Naive thymus-derived CD8-positive, alpha-beta T cell (primary cell): ENCODE measurements at regions of chr13 and their contacts with region 1.

Region 1: GRCh38 chr13:36999054-36999714 is at the start of gene ALG5:
- DNase-seq: peak; percentile 89 to 97 (median 94)
- ATAC-seq: peak; percentile 63 to 70
- H3K4me3 Mint-ChIP-seq: peak within 1 kb of the TSS; percentile 96 to 100 (median 100)
- H3K27ac Mint-ChIP-seq: peak within 1 kb of the TSS; percentile 99 to 100 (median 100)
- H3K4me1 Mint-ChIP-seq: peaks cover 22 to 46% (median 43%) of the 10 kb centered on the region in 4 donors
- H3K27me3 Mint-ChIP-seq: peaks cover 0 to 5% (median 0%) of the 10 kb centered on the region in 5 donors
- polyA plus RNA-seq, gene ALG5: 61.9 to 89.5 (median 73.6) TPM

Region 2: DNA sequence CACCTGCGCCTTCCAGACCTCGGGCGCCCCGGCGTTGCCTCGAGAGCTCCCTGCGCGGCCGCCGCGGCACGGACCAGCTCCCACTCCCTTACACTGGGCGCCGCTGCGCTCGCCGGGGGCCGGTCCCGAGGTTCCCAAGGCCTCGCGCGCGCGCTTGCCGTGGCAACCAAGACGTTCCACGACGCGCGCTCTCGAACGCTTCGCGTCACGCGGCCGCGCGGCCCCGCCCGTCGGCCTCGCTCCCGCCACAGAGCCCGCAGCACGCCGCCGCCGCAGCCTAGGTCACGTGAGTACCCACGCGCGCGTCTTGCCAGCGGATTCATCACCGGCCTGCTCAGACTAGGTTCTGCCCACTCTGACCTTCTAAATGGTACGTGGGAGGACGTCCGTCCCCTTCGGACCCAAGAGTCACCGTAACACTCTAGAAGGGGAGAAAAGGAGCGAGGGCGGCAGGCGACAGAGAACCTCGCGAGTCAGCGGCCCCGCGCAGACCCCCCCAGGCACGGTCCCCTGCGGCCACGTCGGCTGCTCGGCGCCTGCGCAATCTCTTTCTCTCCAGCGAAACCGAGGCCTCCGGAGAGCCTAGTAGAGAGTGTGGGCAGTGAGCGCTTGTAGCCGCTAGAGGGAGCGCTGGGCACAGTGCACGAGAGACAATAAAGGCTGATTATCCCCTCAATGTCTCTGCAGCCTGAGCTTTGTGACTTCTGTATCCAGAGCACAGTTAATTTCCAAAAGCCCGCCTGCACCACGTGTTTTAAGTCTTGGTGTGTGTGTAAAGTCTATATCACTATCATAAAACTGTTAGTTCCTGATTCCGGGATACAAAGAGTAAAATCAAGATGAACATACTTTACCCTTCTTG is 652.7 kb before region 1 on chr13 and contains the start of gene SPART:
- POLR2A ChIA-PET with region 1: interaction called, 14 read pairs
- DNase-seq: peak; percentile 81 to 96 (median 87)
- ATAC-seq: peak; percentile 82 to 86
- H3K4me3 Mint-ChIP-seq: peak within 1 kb of the TSS; percentile 86 to 98 (median 95)
- H3K27ac Mint-ChIP-seq: peak within 1 kb of the TSS; percentile 93 to 99 (median 98)
- H3K4me1 Mint-ChIP-seq: peaks cover 23 to 38% (median 33%) of the 10 kb centered on the region in 4 donors
- H3K27me3 Mint-ChIP-seq: peaks cover 0 to 1% (median 0%) of the 10 kb centered on the region in 5 donors
- polyA plus RNA-seq, gene SPART: 23.1 to 44.3 (median 32.4) TPM

Region 3: GRCh38 chr13:36858290-36858689 is 140.9 kb before region 1 on chr13:
- POLR2A ChIA-PET with region 1: no interaction called
- DNase-seq: no peak
- ATAC-seq: no peak
- H3K4me3 Mint-ChIP-seq: no peak overlapping the region
- H3K27ac Mint-ChIP-seq: no peak overlapping the region
- H3K4me1 Mint-ChIP-seq: peaks cover 0 to 2% (median 0%) of the 10 kb centered on the region in 4 donors
- H3K27me3 Mint-ChIP-seq: peaks cover 14 to 55% (median 32%) of the 10 kb centered on the region in 5 donors

Region 4: DNA sequence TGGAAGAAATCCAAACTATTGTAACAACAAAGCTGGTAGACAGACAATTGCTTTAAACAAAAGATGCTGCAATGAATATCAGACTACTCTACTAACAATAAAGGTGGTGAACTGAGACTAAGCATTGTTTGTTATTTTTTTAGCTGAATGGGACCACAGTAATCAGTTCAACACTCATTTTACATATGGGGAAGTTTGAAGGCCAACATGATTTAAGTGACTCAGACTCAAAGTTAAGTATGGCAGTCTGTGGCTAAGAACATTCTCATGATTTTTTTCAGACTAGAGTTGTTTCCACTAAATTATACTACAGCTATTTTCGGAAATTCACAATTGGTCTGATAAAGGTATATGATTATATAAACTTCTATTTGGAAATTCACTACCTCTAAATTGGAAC is 11.8 kb after region 1 on chr13:
- POLR2A ChIA-PET with region 1: interaction called, 17 read pairs
- DNase-seq: no peak
- ATAC-seq: no peak
- H3K4me3 Mint-ChIP-seq: no peak overlapping the region
- H3K27ac Mint-ChIP-seq: peak overlapping the region in 2 of 10 donors; percentile 29 to 68
- H3K4me1 Mint-ChIP-seq: peaks cover 0 to 12% (median 6%) of the 10 kb centered on the region in 4 donors
- H3K27me3 Mint-ChIP-seq: no peaks in the 10 kb centered on the region

Region 5: GRCh38 chr13:37023871-37024270 is 24.7 kb after region 1 on chr13:
- POLR2A ChIA-PET with region 1: interaction called, 10 read pairs
- DNase-seq: no peak
- ATAC-seq: no peak
- H3K4me3 Mint-ChIP-seq: no peak overlapping the region
- H3K27ac Mint-ChIP-seq: peak overlapping the region in 5 of 10 donors; percentile 10 to 63 (median 29)
- H3K4me1 Mint-ChIP-seq: peaks cover 0 to 5% (median 1%) of the 10 kb centered on the region in 4 donors
- H3K27me3 Mint-ChIP-seq: no peaks in the 10 kb centered on the region

Region 6: DNA sequence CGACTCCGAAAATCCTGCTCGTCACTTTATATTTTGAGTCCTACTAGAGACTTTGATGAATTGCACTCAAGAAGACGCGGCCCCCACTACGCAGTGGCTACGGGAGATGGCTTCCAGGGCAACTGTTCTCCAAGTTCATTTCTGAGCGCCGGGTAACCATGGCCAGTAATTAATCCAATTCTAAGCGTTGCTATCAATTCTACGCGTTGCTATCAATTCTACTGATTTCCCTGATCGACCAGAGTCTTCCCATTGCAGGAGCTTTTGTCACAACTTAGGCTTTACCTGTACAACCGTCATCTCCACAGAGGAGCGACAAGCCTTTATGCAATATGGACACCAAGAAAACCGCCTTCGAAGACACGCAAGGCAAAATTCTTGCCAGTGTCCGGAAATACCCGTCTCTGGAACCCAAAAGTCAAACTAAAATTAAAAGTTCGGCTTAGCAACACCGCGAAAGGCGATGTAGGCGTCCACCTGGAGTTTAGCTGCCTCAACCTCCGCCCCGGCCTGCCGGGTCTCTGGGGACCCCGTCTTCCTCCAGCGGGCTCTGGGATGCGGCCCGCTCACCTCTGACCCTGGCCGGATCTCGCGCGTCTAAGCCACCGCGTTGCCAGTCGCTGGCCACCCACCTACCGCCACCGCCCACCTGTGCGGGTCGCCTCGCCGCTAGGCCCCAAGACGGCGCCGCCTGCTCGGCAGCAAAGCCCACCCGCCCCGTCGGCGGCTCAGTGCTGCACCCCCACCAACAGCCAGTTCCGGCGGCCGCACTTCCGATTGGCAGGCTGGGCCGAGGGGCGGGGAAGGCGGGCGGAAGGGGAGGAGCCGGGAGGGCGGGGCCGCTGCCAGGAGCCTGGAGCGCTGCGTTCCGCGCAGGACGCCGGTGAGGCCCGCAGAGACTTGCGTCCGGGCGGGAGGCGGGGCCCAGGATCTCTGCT is 60.0 kb after region 1 on chr13 and contains the start of gene SUPT20H:
- POLR2A ChIA-PET with region 1: interaction called, 76 read pairs
- DNase-seq: peak; percentile 87 to 97 (median 92)
- ATAC-seq: peak; percentile 89 to 92
- H3K4me3 Mint-ChIP-seq: peak within 1 kb of the TSS; percentile 90 to 97 (median 94)
- H3K27ac Mint-ChIP-seq: peak within 1 kb of the TSS; percentile 95 to 99 (median 98)
- H3K4me1 Mint-ChIP-seq: peaks cover 10 to 51% (median 42%) of the 10 kb centered on the region in 4 donors
- H3K27me3 Mint-ChIP-seq: peaks cover 0 to 2% (median 0%) of the 10 kb centered on the region in 5 donors
- polyA plus RNA-seq, gene SUPT20H: 45.4 to 59.1 (median 45.8) TPM

Region 7: GRCh38 chr13:38349390-38350113 is 1350.4 kb after region 1 on chr13 and contains the start of gene UFM1:
- POLR2A ChIA-PET with region 1: interaction called, 13 read pairs
- DNase-seq: peak; percentile 71 to 94 (median 86)
- ATAC-seq: peak; percentile 94
- H3K4me3 Mint-ChIP-seq: peak within 1 kb of the TSS; percentile 93 to 100 (median 99)
- H3K27ac Mint-ChIP-seq: peak within 1 kb of the TSS; percentile 97 to 99 (median 99)
- H3K4me1 Mint-ChIP-seq: peaks cover 18 to 48% (median 44%) of the 10 kb centered on the region in 4 donors
- H3K27me3 Mint-ChIP-seq: no peaks in the 10 kb centered on the region
- polyA plus RNA-seq, gene UFM1: 50.0 to 59.0 (median 57.0) TPM